CD4-positive, alpha-beta memory T cell (primary cell): ENCODE measurements at regions of chr6 and their contacts with region 1.

Region 1: DNA sequence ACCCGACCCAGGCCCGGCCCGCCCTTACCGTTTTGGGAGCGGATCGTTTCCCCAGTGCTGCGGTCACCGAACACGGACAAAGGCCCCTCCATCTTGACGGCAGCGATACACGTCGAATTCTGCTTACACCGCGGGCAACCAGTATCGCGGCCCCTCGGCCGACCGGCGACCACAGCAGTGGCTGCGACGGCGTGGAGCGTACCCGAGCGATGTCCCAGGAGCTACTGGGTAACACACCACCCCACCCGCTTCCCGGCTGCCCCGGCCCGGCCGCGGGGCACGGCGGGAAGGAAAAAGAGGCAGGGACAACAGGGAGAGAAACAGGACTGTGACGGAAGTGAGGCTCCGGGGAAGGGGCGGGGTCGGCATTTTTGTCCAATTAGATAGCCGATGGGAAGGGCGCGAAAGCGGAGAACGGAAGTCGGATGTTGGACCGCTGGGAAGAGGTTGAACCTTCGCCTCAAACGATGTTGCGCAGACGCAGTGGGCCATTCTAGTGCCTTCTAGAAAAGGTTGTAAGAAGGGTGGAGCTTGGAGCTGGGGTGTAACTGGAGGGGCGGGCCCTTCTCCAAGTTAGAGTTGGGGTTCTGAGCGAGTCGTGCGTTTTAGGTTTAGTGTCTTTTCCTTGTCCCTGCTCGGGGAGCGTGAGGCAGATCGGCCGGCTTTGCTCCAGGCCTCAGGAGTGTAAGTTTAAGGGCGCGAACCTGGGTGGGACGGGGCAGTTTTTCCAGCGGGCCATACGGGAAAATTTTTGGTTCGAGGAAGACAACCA is at the start of gene TCP1:
- DNase-seq: peak; percentile 97 to 100 (median 98)
- H3K4me3 ChIP-seq: peak within 1 kb of the TSS; percentile 81 to 90
- H3K4me3 Mint-ChIP-seq: peak within 1 kb of the TSS; percentile 94 to 99 (median 97)
- H3K27ac ChIP-seq: peak within 1 kb of the TSS; percentile 93
- H3K27ac Mint-ChIP-seq: peak within 1 kb of the TSS; percentile 93 to 99 (median 97)
- H3K4me1 ChIP-seq: peaks cover 54% of the 10 kb centered on the region
- H3K4me1 Mint-ChIP-seq: peaks cover 32 to 75% (median 60%) of the 10 kb centered on the region in 4 donors
- H3K27me3 ChIP-seq: no peaks in the 10 kb centered on the region
- H3K27me3 Mint-ChIP-seq: no peaks in the 10 kb centered on the region
- total RNA-seq, gene TCP1: 151 to 162 TPM

Region 2: DNA sequence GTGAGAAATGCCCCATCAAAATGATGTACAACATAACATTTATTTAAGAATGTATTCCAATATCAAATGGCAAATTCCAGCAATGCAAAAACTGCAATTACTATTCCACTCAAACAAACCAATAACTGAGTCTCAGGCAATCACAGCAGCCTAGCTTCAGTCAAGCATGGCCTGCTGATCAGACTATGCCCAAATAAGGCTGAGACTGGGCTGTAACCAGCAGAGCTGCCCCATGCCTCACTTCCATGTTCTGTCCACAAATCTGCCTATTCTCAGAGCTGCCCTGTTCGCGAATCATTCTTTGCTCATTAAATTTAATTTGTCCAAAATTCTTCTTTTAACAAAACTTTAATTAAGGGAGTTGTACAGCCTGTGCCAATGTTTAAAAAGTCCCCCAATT is 465.0 kb before region 1 on chr6:
- CTCF ChIA-PET with region 1: no interaction called
- POLR2A ChIA-PET with region 1: no interaction called
- intact Hi-C with region 1: no loop called
- DNase-seq: no peak
- H3K4me3 ChIP-seq: no peak overlapping the region
- H3K4me3 Mint-ChIP-seq: no peak overlapping the region
- H3K27ac ChIP-seq: no peak overlapping the region
- H3K27ac Mint-ChIP-seq: no peak overlapping the region
- H3K4me1 ChIP-seq: no peaks in the 10 kb centered on the region
- H3K4me1 Mint-ChIP-seq: no peaks in the 10 kb centered on the region
- H3K27me3 ChIP-seq: no peaks in the 10 kb centered on the region
- H3K27me3 Mint-ChIP-seq: peaks cover 11 to 19% of the 10 kb centered on the region in 2 donors

Region 3: DNA sequence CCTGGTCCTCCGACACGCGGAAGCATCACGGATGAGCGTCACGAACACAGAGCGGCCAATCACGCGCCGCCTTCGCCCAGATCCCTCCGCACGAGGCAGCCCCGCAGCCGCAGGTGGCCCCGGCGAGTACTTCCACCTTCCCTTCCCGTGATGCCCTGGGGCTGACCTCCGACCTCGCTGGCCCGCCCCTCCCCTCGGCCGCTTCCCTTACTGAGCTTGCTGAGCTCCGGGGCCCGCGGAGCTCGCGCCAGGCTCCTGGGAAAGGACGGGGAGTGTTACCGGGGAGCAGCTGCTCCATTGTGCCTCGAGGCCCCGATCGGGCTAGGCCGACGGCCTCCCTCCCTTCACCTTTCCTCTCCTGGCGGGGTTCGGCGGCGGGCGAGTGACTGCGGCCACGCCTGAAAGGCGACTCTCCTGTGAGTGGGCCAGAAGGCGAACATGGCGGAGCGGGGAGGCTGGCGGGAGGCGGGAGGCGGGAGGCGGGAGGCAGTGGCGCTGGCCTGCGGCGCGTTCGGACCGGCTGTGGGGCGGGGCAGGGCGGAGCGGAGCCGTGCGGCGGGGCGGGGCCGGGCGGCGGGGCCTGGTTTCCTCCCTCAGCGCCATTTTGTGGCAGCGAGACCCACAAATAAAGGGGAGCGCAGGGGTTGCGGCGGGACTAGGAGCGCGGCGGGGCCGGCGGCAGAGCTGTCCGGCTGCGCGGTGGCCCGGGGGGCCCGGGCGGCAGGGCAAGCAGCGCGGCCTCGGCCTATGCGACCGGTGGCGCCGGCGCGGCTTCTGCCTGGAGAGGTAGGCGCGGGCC is 62.4 kb before region 1 on chr6 and contains the start of gene WTAP:
- CTCF ChIA-PET with region 1: interaction called, 15 read pairs
- POLR2A ChIA-PET with region 1: interaction called, 169 read pairs
- intact Hi-C with region 1: loop called (anchors 1 kb)
- DNase-seq: peak; percentile 96 to 98 (median 97)
- H3K4me3 ChIP-seq: peak within 1 kb of the TSS; percentile 39 to 78
- H3K4me3 Mint-ChIP-seq: peak within 1 kb of the TSS; percentile 91 to 96 (median 95)
- H3K27ac ChIP-seq: peak within 1 kb of the TSS; percentile 97
- H3K27ac Mint-ChIP-seq: peak within 1 kb of the TSS; percentile 99
- H3K4me1 ChIP-seq: peaks cover 65% of the 10 kb centered on the region
- H3K4me1 Mint-ChIP-seq: peaks cover 30 to 74% (median 52%) of the 10 kb centered on the region in 4 donors
- H3K27me3 ChIP-seq: no peaks in the 10 kb centered on the region
- H3K27me3 Mint-ChIP-seq: no peaks in the 10 kb centered on the region
- total RNA-seq, gene WTAP: 151 to 159 TPM

Region 4: DNA sequence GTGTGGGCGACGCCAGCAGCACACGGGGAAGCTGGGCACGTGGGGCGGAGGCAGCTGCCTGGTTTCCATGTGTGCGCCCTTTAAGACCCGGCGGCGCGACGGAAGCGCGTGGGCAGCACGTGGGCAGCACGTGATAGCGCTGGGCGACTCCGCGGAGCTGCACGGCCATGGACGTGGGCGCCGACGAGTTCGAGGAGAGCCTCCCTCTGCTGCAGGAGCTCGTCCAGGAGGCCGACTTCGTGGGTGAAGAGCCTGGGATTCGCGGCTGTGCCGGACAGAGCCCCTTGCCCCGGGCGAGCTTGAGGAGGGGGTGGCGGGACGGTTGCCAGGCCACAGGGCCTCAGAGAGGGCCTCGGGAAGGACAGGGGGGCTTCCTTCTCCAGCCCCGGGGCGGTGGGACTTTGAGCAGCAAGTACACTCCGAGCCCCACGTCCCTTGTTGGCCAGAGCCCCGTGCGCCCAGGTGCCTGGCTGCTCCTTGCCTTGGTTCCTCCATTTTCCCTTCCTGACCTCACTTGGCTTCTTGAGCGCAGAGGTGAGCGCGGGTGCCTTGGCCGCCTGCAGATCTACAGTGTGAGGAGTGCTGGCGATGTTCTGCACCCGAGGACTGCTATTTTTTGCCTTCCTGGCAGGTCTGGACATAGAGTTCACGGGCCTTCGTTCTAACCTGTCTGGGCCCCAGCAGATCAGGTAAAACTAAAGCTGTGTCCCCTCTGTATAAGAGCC is 10.7 kb after region 1 on chr6 and contains the start of gene PNLDC1:
- CTCF ChIA-PET with region 1: no interaction called
- POLR2A ChIA-PET with region 1: interaction called, 14 read pairs
- intact Hi-C with region 1: no loop called
- DNase-seq: no peak
- H3K4me3 ChIP-seq: no peak within 1 kb of the TSS
- H3K4me3 Mint-ChIP-seq: no peak within 1 kb of the TSS
- H3K27ac ChIP-seq: no peak within 1 kb of the TSS
- H3K27ac Mint-ChIP-seq: peak within 1 kb of the TSS in 3 of 7 donors; percentile 22 to 85 (median 30)
- H3K4me1 ChIP-seq: peaks cover 8% of the 10 kb centered on the region
- H3K4me1 Mint-ChIP-seq: peaks cover 0 to 1% (median under 1%) of the 10 kb centered on the region in 4 donors
- H3K27me3 ChIP-seq: no peaks in the 10 kb centered on the region
- H3K27me3 Mint-ChIP-seq: no peaks in the 10 kb centered on the region
- total RNA-seq, gene PNLDC1: 0.47 to 0.94 TPM

Region 5: DNA sequence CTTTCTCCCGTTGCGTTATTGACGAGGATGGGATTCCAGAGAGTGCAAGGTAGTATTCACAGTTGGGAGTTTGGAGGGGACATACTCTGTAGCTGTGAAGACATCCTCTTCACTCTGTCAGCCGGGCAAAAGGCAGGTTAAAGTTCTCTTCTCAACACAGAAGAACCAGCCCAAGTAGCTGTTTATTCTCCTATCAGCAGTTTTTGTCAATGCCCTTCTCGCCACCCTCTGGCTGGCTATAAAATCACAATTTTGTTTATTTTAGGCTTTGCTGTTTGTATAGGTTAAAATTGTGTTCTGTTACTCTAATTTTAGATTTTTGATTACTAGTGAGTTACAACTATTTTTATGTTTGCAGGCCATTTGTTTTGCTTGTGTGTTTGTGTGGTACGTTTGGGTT is 63.3 kb after region 1 on chr6:
- CTCF ChIA-PET with region 1: interaction called, 17 read pairs
- POLR2A ChIA-PET with region 1: no interaction called
- intact Hi-C with region 1: no loop called
- DNase-seq: peak in 4 of 5 donors; percentile 19 to 38 (median 30)
- H3K4me3 ChIP-seq: no peak overlapping the region
- H3K4me3 Mint-ChIP-seq: no peak overlapping the region
- H3K27ac ChIP-seq: no peak overlapping the region
- H3K27ac Mint-ChIP-seq: no peak overlapping the region
- H3K4me1 ChIP-seq: no peaks in the 10 kb centered on the region
- H3K4me1 Mint-ChIP-seq: no peaks in the 10 kb centered on the region
- H3K27me3 ChIP-seq: no peaks in the 10 kb centered on the region
- H3K27me3 Mint-ChIP-seq: peaks cover 0 to 1% of the 10 kb centered on the region in 2 donors

Region 6: GRCh38 chr6:160462551-160463109 is 673.1 kb after region 1 on chr6:
- CTCF ChIA-PET with region 1: no interaction called
- POLR2A ChIA-PET with region 1: interaction called, 3 read pairs
- intact Hi-C with region 1: loop called (anchors 10 kb)
- DNase-seq: peak; percentile 82 to 90 (median 86)
- H3K4me3 ChIP-seq: peak overlapping the region; percentile 23 to 39
- H3K4me3 Mint-ChIP-seq: peak overlapping the region; percentile 51 to 86 (median 73)
- H3K27ac ChIP-seq: no peak overlapping the region
- H3K27ac Mint-ChIP-seq: peak overlapping the region; percentile 25 to 90 (median 85)
- H3K4me1 ChIP-seq: peaks cover 76% of the 10 kb centered on the region
- H3K4me1 Mint-ChIP-seq: peaks cover 60 to 80% (median 71%) of the 10 kb centered on the region in 4 donors
- H3K27me3 ChIP-seq: no peaks in the 10 kb centered on the region
- H3K27me3 Mint-ChIP-seq: no peaks in the 10 kb centered on the region